Dendritic cell treated with granulocyte-macrophage colony-stimulating factor and Interleukin-4, amounts not matched to agents 40 ng/mL and 50 ng/mL, for 4 days (primary cell): ENCODE measurements at regions of chrX and their contacts with region 1.

Region 1: DNA sequence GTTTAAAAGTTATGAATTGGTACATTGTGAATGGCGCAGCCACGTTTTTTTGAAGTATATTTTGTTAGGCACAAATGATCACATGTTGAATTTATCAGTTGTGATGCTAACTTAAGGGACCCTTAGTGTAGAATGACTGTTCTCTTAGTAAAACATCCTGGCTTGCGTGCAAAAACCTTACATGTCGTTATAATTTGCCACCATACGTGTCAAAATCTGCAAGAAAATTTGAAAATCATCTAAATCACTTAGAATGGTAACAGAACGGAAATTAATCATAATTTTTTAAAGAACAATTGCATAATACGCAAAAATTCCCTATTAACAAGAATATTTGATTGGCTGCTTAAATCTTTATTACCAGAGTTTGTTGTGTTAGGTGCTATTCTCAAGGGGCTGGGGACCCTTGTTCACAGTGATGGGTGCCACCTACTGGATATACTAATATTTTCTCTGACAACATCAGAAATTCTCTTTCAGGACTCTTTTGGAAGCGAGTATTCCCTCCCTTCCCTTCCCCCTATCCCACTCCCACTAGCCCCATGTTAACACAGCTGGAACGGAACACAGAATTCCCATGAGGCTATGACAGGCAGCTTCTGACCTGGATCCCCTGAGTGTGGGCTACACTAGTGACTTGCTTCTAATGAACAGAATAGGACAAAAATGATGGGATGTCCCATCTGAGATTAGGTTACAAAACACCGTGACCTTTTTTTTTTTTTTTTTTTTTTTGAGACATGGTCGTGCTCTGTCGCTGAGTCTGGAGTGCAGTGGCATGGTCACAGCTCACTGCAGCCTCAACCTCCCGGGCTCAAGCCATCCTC is 71.8 kb downstream of the SUPT20HL2 start:
- H3K4me3 Mint-ChIP-seq: no peak overlapping the region
- H3K27ac Mint-ChIP-seq: peak overlapping the region; percentile 46
- H3K4me1 Mint-ChIP-seq: peaks cover 20% of the 10 kb centered on the region
- H3K27me3 Mint-ChIP-seq: peaks cover 5% of the 10 kb centered on the region

Region 2: GRCh38 chrX:24150051-24150790 is 91.8 kb before region 1 on chrX:
- intact Hi-C with region 1: loop called (anchors 2 kb)
- H3K4me3 Mint-ChIP-seq: peak overlapping the region; percentile 80
- H3K27ac Mint-ChIP-seq: peak overlapping the region; percentile 82
- H3K4me1 Mint-ChIP-seq: peaks cover 26% of the 10 kb centered on the region
- H3K27me3 Mint-ChIP-seq: no peaks in the 10 kb centered on the region